ENCODE measurements at regions of chr9 and their contacts with region 1.

Region 1: GRCh38 chr9:77149879-77150278 is 27.5 kb upstream of the VPS13A start:
- DNase-seq: no peak
- H3K4me3 ChIP-seq: no peak overlapping the region
- H3K27ac ChIP-seq: no peak overlapping the region
- H3K4me1 ChIP-seq: peaks cover 0 to 3% (median 0%) of the 10 kb centered on the region in 4 experiments; a peak in 1 of 7 replicates
- H3K27me3 ChIP-seq: no peaks in the 10 kb centered on the region; a peak in 1 of 7 replicates
- CTCF ChIP-seq: no peak
- EP300 ChIP-seq: no peak
- POLR2A ChIP-seq: no peak
- RAD21 ChIP-seq: no peak

Region 2: GRCh38 chr9:76996700-76997099 is 153.2 kb before region 1 on chr9:
- CTCF ChIA-PET with region 1: interaction called, 19 read pairs
- POLR2A ChIA-PET with region 1: no interaction called
- DNase-seq: peak in 1 of 2 experiments; percentile 68
- H3K4me3 ChIP-seq: no peak overlapping the region
- H3K27ac ChIP-seq: no peak overlapping the region
- H3K4me1 ChIP-seq: peaks cover 0 to 5% (median 0%) of the 10 kb centered on the region in 4 experiments; a peak in 1 of 7 replicates
- H3K27me3 ChIP-seq: no peaks in the 10 kb centered on the region
- CTCF ChIP-seq: peak; percentile 86 to 94 (median 94)
- EP300 ChIP-seq: no peak
- POLR2A ChIP-seq: no peak
- RAD21 ChIP-seq: peak; percentile 89 to 90

Region 3: DNA sequence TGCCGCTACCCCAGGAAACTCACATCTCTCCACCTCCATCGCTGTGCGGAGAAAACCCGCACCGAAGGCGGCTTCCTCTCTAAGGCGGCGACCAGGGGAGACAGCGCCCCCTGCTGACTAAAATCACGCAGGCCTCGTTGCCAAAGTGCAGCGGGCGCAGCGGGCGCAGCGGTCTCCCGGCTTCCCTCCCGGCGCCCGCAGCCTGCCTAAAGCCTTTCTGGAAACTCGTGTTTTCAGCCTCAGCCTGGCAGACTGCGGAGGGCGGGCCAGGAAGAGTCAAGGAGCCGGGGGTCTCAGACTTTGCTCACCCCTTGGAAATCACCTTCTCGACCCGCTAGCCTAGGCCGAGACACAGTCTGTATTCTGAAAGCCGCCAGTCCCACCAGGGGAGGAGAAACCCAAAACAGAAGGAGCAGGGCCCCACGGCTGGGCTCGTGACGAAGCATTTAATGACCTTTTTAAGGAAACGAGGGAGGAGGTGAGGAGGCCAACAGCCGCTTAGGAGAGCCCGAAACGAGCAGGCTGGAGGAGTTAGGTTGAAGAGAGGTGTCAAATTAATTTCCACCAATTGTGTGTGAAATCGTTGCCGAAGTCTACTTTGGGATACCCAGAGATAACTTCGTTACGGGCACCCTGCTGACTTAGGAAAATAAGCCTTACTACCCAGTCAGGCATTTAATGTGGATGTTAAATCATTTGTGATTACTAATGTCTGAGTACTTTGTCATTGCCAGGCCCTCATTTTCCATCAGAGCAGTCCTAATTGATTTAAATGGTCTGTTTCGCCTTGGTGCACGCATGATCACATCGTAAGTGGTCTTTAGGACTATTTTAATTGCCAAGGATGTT is 137.7 kb before region 1 on chr9:
- CTCF ChIA-PET with region 1: interaction called, 34 read pairs
- POLR2A ChIA-PET with region 1: interaction called, 5 read pairs
- DNase-seq: peak in 1 of 2 experiments; percentile 98
- H3K4me3 ChIP-seq: peak overlapping the region; percentile 20 to 60 (median 42); a peak in 5 of 8 replicates
- H3K27ac ChIP-seq: no peak overlapping the region
- H3K4me1 ChIP-seq: peaks cover 9 to 30% (median 25%) of the 10 kb centered on the region in 4 experiments
- H3K27me3 ChIP-seq: peaks cover 46 to 71% (median 64%) of the 10 kb centered on the region in 4 experiments
- CTCF ChIP-seq: peak; percentile 89 to 91 (median 91)
- EP300 ChIP-seq: no peak
- POLR2A ChIP-seq: no peak
- RAD21 ChIP-seq: peak; percentile 69 to 79

Region 4: GRCh38 chr9:77018058-77018968 is 131.6 kb before region 1 on chr9:
- CTCF ChIA-PET with region 1: interaction called, 34 read pairs
- POLR2A ChIA-PET with region 1: interaction called, 5 read pairs
- DNase-seq: no peak
- H3K4me3 ChIP-seq: peak overlapping the region; percentile 33 to 65 (median 56)
- H3K27ac ChIP-seq: no peak overlapping the region
- H3K4me1 ChIP-seq: peaks cover 18 to 58% (median 39%) of the 10 kb centered on the region in 4 experiments
- H3K27me3 ChIP-seq: peaks cover 86 to 99% (median 98%) of the 10 kb centered on the region in 4 experiments
- CTCF ChIP-seq: no peak
- EP300 ChIP-seq: no peak
- POLR2A ChIP-seq: no peak
- RAD21 ChIP-seq: no peak

Region 5: GRCh38 chr9:77038281-77039036 is 111.4 kb before region 1 on chr9:
- CTCF ChIA-PET with region 1: interaction called, 14 read pairs
- POLR2A ChIA-PET with region 1: interaction called, 3 read pairs
- DNase-seq: no peak
- H3K4me3 ChIP-seq: peak overlapping the region in 1 of 4 experiments; percentile 31; a peak in 1 of 8 replicates
- H3K27ac ChIP-seq: no peak overlapping the region; the same call in 1 of the 2 replicates
- H3K4me1 ChIP-seq: peaks cover 0 to 14% (median 8%) of the 10 kb centered on the region in 4 experiments; a peak in 6 of 7 replicates
- H3K27me3 ChIP-seq: peaks cover 0 to 13% (median 7%) of the 10 kb centered on the region in 4 experiments; a peak in 5 of 7 replicates
- CTCF ChIP-seq: no peak
- EP300 ChIP-seq: no peak
- POLR2A ChIP-seq: no peak
- RAD21 ChIP-seq: no peak

Region 6: GRCh38 chr9:77166193-77166592 is 16.3 kb after region 1 on chr9:
- CTCF ChIA-PET with region 1: interaction called, 16 read pairs
- POLR2A ChIA-PET with region 1: no interaction called
- DNase-seq: no peak
- H3K4me3 ChIP-seq: no peak overlapping the region
- H3K27ac ChIP-seq: no peak overlapping the region; the same call in 1 of the 2 replicates
- H3K4me1 ChIP-seq: peaks cover 0 to 4% (median 3%) of the 10 kb centered on the region in 4 experiments; a peak in 2 of 7 replicates
- H3K27me3 ChIP-seq: no peaks in the 10 kb centered on the region
- CTCF ChIP-seq: no peak
- EP300 ChIP-seq: no peak
- POLR2A ChIP-seq: no peak
- RAD21 ChIP-seq: no peak

Region 7: DNA sequence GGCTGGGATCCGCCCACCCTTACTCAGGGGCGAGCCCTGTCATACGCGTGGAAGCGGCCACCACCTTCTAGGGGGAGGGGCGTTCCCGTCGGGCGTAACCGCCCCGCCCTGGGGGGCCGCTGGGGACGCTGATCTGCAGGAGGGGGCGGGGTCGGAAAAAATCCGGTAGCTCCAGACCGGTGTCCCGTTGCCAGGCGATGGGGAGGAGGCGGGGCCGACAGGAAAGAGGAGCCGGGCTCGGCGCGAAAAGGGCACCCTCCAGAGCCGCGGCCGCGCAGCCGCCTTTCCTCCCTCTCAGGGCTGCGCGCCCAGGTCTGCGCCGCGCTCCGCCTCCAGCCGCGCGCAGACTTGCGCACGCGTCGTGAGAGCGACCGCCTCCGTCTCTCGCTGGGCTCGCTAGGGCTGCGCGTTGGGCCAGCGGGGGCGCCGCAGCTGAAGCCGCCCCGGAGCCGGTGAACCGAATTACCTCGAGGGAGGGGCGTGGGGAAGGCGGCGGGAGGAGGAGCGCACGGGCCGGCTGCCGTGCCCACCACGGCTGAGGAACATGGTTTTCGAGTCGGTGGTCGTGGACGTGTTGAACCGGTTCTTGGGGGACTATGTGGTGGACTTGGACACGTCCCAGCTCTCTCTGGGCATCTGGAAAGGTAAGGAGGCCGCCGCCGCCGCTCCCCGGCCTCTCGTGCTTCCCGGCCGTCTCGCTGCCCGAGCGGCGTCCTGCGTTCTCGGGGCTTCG is 27.4 kb after region 1 on chr9 and contains the start of gene VPS13A:
- CTCF ChIA-PET with region 1: no interaction called
- POLR2A ChIA-PET with region 1: no interaction called
- DNase-seq: peak; percentile 92 to 99
- H3K4me3 ChIP-seq: peak within 1 kb of the TSS; percentile 75 to 84 (median 83)
- H3K27ac ChIP-seq: peak within 1 kb of the TSS; percentile 63; the same call in 1 of the 2 replicates
- H3K4me1 ChIP-seq: peaks cover 2 to 6% (median 3%) of the 10 kb centered on the region in 4 experiments; a peak in 6 of 7 replicates
- H3K27me3 ChIP-seq: no peaks in the 10 kb centered on the region
- CTCF ChIP-seq: peak in 2 of 3 experiments; percentile 3 to 16; a peak in 2 of 4 replicates
- EP300 ChIP-seq: no peak
- POLR2A ChIP-seq: peak in 1 of 2 experiments; percentile 68; a peak in 2 of 3 replicates
- RAD21 ChIP-seq: no peak; a peak in 1 of 4 replicates
- total RNA-seq, gene VPS13A: 30.0 and 36.5 TPM in 2 replicates

Region 8: GRCh38 chr9:77194423-77194822 is 44.5 kb after region 1 on chr9:
- CTCF ChIA-PET with region 1: no interaction called
- POLR2A ChIA-PET with region 1: no interaction called
- DNase-seq: no peak
- H3K4me3 ChIP-seq: no peak overlapping the region
- H3K27ac ChIP-seq: no peak overlapping the region
- H3K4me1 ChIP-seq: peaks cover 0 to 9% (median 0%) of the 10 kb centered on the region in 4 experiments; a peak in 3 of 7 replicates
- H3K27me3 ChIP-seq: no peaks in the 10 kb centered on the region
- CTCF ChIP-seq: no peak
- EP300 ChIP-seq: no peak
- POLR2A ChIP-seq: no peak
- RAD21 ChIP-seq: no peak

Region 9: DNA sequence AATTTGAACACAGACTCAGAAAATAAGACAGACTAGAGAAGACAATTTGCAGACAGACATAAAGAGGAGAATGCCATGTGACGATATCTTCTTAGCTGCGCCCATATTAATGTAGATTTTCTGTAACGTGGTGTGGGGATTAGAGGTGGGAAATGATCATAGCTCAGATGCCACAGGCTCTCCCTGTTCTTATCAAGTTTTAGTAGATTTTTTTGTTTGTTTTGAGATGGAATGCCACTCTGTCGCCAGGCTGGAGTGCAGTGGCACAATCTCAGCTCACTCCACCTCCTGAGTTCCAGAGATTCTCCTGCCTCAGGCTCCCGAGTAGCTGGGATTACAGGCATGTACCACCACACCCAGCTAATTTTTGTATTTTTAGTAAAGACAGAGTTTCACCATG is 86.8 kb after region 1 on chr9:
- CTCF ChIA-PET with region 1: no interaction called
- POLR2A ChIA-PET with region 1: no interaction called
- DNase-seq: no peak
- H3K4me3 ChIP-seq: no peak overlapping the region
- H3K27ac ChIP-seq: no peak overlapping the region
- H3K4me1 ChIP-seq: no peaks in the 10 kb centered on the region
- H3K27me3 ChIP-seq: no peaks in the 10 kb centered on the region
- CTCF ChIP-seq: no peak
- EP300 ChIP-seq: no peak
- POLR2A ChIP-seq: no peak
- RAD21 ChIP-seq: no peak

Region 10: GRCh38 chr9:77291714-77292113 is 141.8 kb after region 1 on chr9:
- CTCF ChIA-PET with region 1: no interaction called
- POLR2A ChIA-PET with region 1: no interaction called
- DNase-seq: no peak
- H3K4me3 ChIP-seq: no peak overlapping the region
- H3K27ac ChIP-seq: no peak overlapping the region
- H3K4me1 ChIP-seq: peaks cover 0 to 11% (median 2%) of the 10 kb centered on the region in 4 experiments; a peak in 4 of 7 replicates
- H3K27me3 ChIP-seq: no peaks in the 10 kb centered on the region
- CTCF ChIP-seq: peak in 2 of 3 experiments; percentile 62 to 71; a peak in 3 of 4 replicates
- EP300 ChIP-seq: no peak
- POLR2A ChIP-seq: no peak
- RAD21 ChIP-seq: peak; percentile 68 to 74

Measured in H1 (cell line).